AG04449 (cell line): ENCODE measurements at regions of chr20 and their contacts with region 1.

Region 1: GRCh38 chr20:49508435-49509199 is 26.1 kb upstream of the KCNB1 start:
- DNase-seq: no peak
- H3K4me3 ChIP-seq: no peak overlapping the region
- CTCF ChIP-seq: peak; percentile 55

Region 2: GRCh38 chr20:49344975-49345374 is 163.6 kb before region 1 on chr20:
- CTCF ChIA-PET with region 1: interaction called, 313 read pairs
- POLR2A ChIA-PET with region 1: no interaction called
- DNase-seq: peak; percentile 71
- H3K4me3 ChIP-seq: peak overlapping the region; percentile 37
- CTCF ChIP-seq: no peak

Region 3: GRCh38 chr20:49496553-49497397 is 11.8 kb before region 1 on chr20:
- CTCF ChIA-PET with region 1: interaction called, 39 read pairs
- POLR2A ChIA-PET with region 1: no interaction called
- DNase-seq: no peak
- H3K4me3 ChIP-seq: no peak overlapping the region
- CTCF ChIP-seq: no peak

Region 4: DNA sequence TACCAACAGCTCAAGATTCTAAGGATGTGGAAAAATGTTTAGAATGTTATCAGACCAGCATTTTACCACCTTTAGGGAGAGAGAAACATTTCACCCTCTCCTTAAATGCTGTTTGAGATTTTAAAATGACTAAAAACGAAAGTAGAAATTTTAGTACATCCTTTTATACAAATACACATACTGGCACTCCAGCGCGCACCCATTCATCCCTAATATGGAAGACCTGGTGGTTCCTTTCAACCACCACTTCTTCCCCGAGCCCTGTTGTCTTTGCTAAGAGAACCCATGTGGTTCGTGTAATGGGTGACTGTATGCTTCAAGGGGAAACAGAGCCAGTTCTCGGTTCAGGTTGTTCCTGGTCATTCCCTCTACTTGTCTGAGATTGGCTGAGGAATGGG is 385.5 kb after region 1 on chr20:
- CTCF ChIA-PET with region 1: no interaction called
- POLR2A ChIA-PET with region 1: no interaction called
- DNase-seq: no peak
- H3K4me3 ChIP-seq: no peak overlapping the region
- CTCF ChIP-seq: no peak